ENCODE measurements at regions of chr7 and their contacts with region 1.

Region 1: GRCh38 chr7:26365077-26365900 is 73.6 kb downstream of the SNX10 start:
- DNase-seq: no peak
- H3K4me3 ChIP-seq: no peak overlapping the region
- H3K27ac ChIP-seq: no peak overlapping the region
- H3K4me1 ChIP-seq: no peaks in the 10 kb centered on the region
- H3K27me3 ChIP-seq: peaks cover 0 to 41% (median 8%) of the 10 kb centered on the region in 4 donors
- CTCF ChIP-seq: peak; percentile 70 to 74 (median 72)
- EP300 ChIP-seq: no peak
- POLR2A ChIP-seq: no peak

Region 2: DNA sequence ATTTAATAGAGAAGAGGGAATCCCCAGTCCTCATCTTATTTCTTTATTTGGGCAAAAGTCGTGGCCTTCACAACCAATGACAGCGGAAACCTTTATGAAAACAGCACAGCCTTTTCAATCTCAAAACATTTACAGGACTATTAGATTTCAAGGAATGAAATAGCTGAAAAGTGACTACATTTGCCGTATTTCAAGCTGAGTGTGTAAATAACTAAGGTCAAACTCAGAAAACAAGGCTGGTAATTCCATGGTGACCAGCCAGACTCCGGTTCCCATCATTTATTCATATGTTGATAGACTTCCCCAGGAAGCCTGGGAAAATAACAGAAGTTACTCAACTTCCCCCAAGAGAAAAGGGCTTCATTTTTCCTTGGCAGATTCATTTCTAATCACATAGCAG is 670.6 kb before region 1 on chr7:
- intact Hi-C with region 1: no loop called
- DNase-seq: no peak
- H3K4me3 ChIP-seq: no peak overlapping the region
- H3K27ac ChIP-seq: no peak overlapping the region
- H3K4me1 ChIP-seq: no peaks in the 10 kb centered on the region
- H3K27me3 ChIP-seq: no peaks in the 10 kb centered on the region
- CTCF ChIP-seq: no peak
- EP300 ChIP-seq: no peak
- POLR2A ChIP-seq: no peak

Region 3: DNA sequence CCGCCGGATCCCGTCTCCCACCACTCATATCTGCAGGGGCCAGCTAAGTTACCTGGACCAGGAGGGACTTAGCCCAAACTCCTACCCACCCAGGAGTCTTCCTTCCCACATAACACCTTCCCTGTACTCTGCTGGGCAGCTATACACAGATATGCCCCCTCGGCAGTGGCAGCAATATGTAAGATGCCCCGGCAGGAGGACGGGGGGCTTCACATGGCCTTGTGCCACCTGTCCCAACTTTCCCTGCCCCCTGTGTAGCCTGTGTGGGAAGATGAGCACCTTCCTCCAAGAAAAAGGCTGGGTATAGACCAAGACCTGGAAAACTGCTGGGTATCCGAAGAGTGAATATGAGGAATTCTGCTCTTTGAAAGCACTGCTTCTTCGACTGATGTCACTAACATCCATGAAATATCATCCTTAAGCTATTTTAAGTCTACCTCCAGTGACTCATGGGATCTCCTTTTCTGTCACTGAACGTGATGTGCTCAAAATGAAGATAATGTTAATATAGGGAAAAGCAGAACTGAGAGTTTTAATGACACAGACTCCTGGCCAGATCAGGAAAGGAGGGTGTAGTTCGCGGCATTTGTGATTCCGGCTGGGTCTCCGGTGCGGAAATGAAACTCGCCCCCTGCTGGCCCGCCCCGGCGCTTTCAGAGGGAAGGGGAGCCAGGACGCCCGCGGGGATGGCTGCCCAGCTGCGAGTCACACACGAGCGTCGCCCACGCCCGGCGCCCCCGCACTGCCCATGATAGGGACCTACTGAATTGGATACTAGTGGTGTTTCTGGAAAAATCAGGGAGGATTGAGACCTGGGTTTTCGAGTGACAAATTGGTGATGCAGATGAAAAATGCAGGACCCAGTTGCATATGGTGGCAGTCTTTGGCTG is 470.1 kb before region 1 on chr7:
- intact Hi-C with region 1: loop called (anchors 2 kb)
- DNase-seq: peak; percentile 93
- H3K4me3 ChIP-seq: peak overlapping the region; percentile 20 to 44 (median 26)
- H3K27ac ChIP-seq: no peak overlapping the region
- H3K4me1 ChIP-seq: peaks cover 5 to 19% (median 13%) of the 10 kb centered on the region in 4 donors
- H3K27me3 ChIP-seq: peaks cover 0 to 29% (median 0%) of the 10 kb centered on the region in 4 donors
- CTCF ChIP-seq: peak; percentile 58 to 75 (median 60)
- EP300 ChIP-seq: no peak
- POLR2A ChIP-seq: no peak

Region 4: GRCh38 chr7:26095111-26095510 is 270.2 kb before region 1 on chr7:
- intact Hi-C with region 1: loop called (anchors 2 kb)
- DNase-seq: no peak
- H3K4me3 ChIP-seq: no peak overlapping the region
- H3K27ac ChIP-seq: no peak overlapping the region
- H3K4me1 ChIP-seq: peaks cover 0 to 4% (median 0%) of the 10 kb centered on the region in 4 donors
- H3K27me3 ChIP-seq: peaks cover 0 to 3% (median 0%) of the 10 kb centered on the region in 4 donors
- CTCF ChIP-seq: no peak
- EP300 ChIP-seq: no peak
- POLR2A ChIP-seq: no peak

Region 5: DNA sequence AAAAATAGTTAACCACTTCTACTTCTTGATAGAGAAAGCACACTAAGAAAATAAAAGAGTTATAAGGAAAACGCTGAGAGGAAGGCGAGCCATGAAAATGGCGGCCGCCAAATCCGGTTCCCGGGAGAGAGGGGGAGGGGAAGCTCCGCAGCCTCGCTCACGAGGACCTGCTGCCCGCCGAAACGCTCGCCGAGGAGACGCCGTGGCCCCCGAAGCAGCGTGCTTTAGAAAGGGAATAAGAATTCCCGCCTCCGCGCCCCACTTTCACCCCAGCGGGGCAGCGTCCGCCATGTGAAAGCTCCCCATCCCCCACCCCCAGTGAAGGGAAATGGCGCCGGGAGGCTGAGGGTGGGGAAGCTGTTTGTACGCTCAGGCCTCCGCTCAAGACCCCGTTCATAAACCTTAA is 165.2 kb before region 1 on chr7:
- intact Hi-C with region 1: no loop called
- DNase-seq: no peak
- H3K4me3 ChIP-seq: peak overlapping the region; percentile 95 to 98 (median 96)
- H3K27ac ChIP-seq: peak overlapping the region; percentile 99 to 100 (median 100)
- H3K4me1 ChIP-seq: peaks cover 51 to 56% (median 55%) of the 10 kb centered on the region in 4 donors
- H3K27me3 ChIP-seq: no peaks in the 10 kb centered on the region
- CTCF ChIP-seq: no peak
- EP300 ChIP-seq: no peak
- POLR2A ChIP-seq: no peak

Region 6: DNA sequence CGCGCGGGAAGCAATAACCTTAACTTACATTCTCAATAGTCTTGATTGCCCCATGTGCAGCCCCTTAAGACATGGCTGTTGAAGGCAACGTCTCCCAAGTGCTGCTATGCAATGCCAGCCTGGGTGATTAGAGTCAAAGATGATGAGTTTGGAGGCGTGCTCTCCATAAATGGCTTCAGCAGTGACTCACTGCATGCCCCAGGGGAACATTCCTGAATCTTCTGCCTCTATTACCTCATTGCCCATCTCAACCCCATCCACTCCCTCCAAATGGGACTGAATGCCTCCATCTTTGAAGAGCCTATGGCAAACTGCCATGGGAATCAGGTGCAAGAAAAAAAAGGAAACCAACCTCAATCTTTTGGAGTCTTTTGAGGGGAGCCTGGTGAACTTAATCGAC is 209.2 kb after region 1 on chr7:
- intact Hi-C with region 1: no loop called
- DNase-seq: peak; percentile 72
- H3K4me3 ChIP-seq: no peak overlapping the region
- H3K27ac ChIP-seq: no peak overlapping the region
- H3K4me1 ChIP-seq: no peaks in the 10 kb centered on the region
- H3K27me3 ChIP-seq: peaks cover 0 to 5% (median 0%) of the 10 kb centered on the region in 4 donors
- CTCF ChIP-seq: no peak
- EP300 ChIP-seq: no peak
- POLR2A ChIP-seq: no peak

Region 7: GRCh38 chr7:26667500-26668133 is 302.3 kb after region 1 on chr7:
- intact Hi-C with region 1: loop called (anchors 2 kb)
- DNase-seq: no peak
- H3K4me3 ChIP-seq: no peak overlapping the region
- H3K27ac ChIP-seq: no peak overlapping the region
- H3K4me1 ChIP-seq: peaks cover 0 to 16% (median 7%) of the 10 kb centered on the region in 4 donors
- H3K27me3 ChIP-seq: no peaks in the 10 kb centered on the region
- CTCF ChIP-seq: peak; percentile 67 to 76 (median 76)
- EP300 ChIP-seq: no peak
- POLR2A ChIP-seq: no peak

Region 8: DNA sequence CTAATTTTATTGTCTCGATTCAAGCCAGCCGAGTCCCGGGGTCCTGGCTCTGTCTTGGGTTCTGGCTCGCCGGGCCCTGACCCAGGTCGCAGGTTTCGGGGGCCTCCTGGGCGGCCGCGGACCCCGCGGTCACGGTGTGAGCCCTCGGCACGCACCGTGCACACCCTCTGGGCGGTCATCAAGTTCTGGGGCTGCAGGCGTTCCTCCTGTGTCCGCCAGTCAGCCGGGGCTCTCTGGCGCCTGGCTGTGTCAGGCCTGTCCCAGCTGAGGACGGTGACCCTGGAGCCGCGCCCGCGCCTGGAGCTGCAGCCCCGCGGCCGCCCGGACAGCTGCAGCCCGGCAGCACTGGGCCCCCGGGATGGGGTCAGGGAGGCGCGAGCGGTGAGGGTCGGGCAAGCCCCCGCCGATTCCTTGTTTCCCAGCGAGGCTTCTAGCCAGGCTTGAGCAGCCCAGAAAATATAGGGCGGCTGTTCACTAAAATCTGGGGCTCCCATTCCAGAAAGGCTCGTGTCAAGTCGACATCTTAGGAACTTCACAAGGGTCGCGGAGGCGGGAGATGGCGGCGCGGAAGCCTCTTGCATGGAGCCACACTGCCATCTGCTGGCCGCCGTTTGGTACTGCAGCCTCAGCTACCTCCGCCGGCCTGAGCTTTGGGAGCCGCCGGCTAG is 795.4 kb after region 1 on chr7:
- intact Hi-C with region 1: loop called (anchors 5 kb)
- DNase-seq: peak; percentile 97
- H3K4me3 ChIP-seq: peak overlapping the region; percentile 54 to 59 (median 56)
- H3K27ac ChIP-seq: no peak overlapping the region
- H3K4me1 ChIP-seq: peaks cover 25 to 69% (median 50%) of the 10 kb centered on the region in 4 donors
- H3K27me3 ChIP-seq: peaks cover 20 to 100% (median 91%) of the 10 kb centered on the region in 4 donors
- CTCF ChIP-seq: peak; percentile 97 to 100 (median 99)
- EP300 ChIP-seq: no peak
- POLR2A ChIP-seq: no peak